Activated CD4-positive, alpha-beta memory T cell treated with anti-CD3 and anti-CD28 coated beads for 36 hours (primary cell): ENCODE measurements at regions of chr18 and their contacts with region 1.

Region 1: GRCh38 chr18:62522504-62523254 is at the start of gene ZCCHC2:
- DNase-seq: peak; percentile 99
- H3K4me3 Mint-ChIP-seq: peak within 1 kb of the TSS; percentile 94
- H3K27ac Mint-ChIP-seq: peak within 1 kb of the TSS; percentile 94
- H3K4me1 Mint-ChIP-seq: peaks cover 16% of the 10 kb centered on the region
- H3K27me3 Mint-ChIP-seq: no peaks in the 10 kb centered on the region
- total RNA-seq, gene ZCCHC2: 24.9 to 27.5 TPM

Region 2: GRCh38 chr18:62186774-62187542 is 335.7 kb before region 1 on chr18 and contains the starts of genes PIGN and RELCH:
- CTCF ChIA-PET with region 1: no interaction called
- POLR2A ChIA-PET with region 1: interaction called, 3 read pairs
- intact Hi-C with region 1: loop called (anchors 2 kb)
- DNase-seq: peak; percentile 97
- H3K4me3 Mint-ChIP-seq: peak within 1 kb of the TSS; percentile 99
- H3K27ac Mint-ChIP-seq: peak within 1 kb of the TSS; percentile 93
- H3K4me1 Mint-ChIP-seq: peaks cover 51% of the 10 kb centered on the region
- H3K27me3 Mint-ChIP-seq: no peaks in the 10 kb centered on the region
- total RNA-seq, gene PIGN: 26.2 to 27.8 TPM
- total RNA-seq, gene RELCH: 16.1 to 17.7 TPM

Region 3: GRCh38 chr18:62445386-62445917 is 77.2 kb before region 1 on chr18:
- CTCF ChIA-PET with region 1: no interaction called
- POLR2A ChIA-PET with region 1: interaction called, 5 read pairs
- intact Hi-C with region 1: loop called (anchors 5 kb)
- DNase-seq: peak; percentile 42
- H3K4me3 Mint-ChIP-seq: no peak overlapping the region
- H3K27ac Mint-ChIP-seq: no peak overlapping the region
- H3K4me1 Mint-ChIP-seq: peaks cover 10% of the 10 kb centered on the region
- H3K27me3 Mint-ChIP-seq: peaks cover 7% of the 10 kb centered on the region

Region 4: DNA sequence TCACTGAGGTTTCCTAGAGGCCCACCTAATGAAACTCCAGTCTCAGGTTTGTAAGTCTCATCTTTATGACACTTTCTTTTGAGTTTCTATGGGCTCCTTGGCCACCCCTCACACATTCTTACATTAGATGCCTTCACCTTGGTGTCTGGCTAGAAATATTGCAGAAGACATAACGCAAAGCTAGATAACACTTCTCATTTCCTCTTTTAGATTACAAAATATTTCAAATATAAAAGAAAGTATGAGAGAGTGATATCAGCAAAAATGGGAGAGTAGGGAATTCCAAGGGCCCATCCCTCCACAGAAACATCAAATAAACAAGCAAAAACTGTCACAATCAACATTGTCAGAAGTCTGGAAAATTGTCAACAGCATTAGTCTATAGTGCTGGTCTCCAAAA is 43.1 kb before region 1 on chr18:
- CTCF ChIA-PET with region 1: no interaction called
- POLR2A ChIA-PET with region 1: no interaction called
- intact Hi-C with region 1: no loop called
- DNase-seq: no peak
- H3K4me3 Mint-ChIP-seq: no peak overlapping the region
- H3K27ac Mint-ChIP-seq: no peak overlapping the region
- H3K4me1 Mint-ChIP-seq: no peaks in the 10 kb centered on the region
- H3K27me3 Mint-ChIP-seq: peaks cover 22% of the 10 kb centered on the region

Region 5: GRCh38 chr18:62555135-62555534 is 32.5 kb after region 1 on chr18:
- CTCF ChIA-PET with region 1: no interaction called
- POLR2A ChIA-PET with region 1: no interaction called
- intact Hi-C with region 1: loop called (anchors 2 kb)
- DNase-seq: no peak
- H3K4me3 Mint-ChIP-seq: no peak overlapping the region
- H3K27ac Mint-ChIP-seq: no peak overlapping the region
- H3K4me1 Mint-ChIP-seq: peaks cover 18% of the 10 kb centered on the region
- H3K27me3 Mint-ChIP-seq: no peaks in the 10 kb centered on the region